ENCODE measurements at regions of chr11 and their contacts with region 1.

Region 1: GRCh38 chr11:82900277-82901164 is at the start of gene PRCP:
- DNase-seq: peak; percentile 99
- H3K4me3 ChIP-seq: peak within 1 kb of the TSS; percentile 63
- H3K4me3 Mint-ChIP-seq: peak within 1 kb of the TSS; percentile 93
- H3K27ac Mint-ChIP-seq: peak within 1 kb of the TSS; percentile 95
- H3K4me1 ChIP-seq: peaks cover 4% of the 10 kb centered on the region; the same call in 1 of the 2 replicates
- H3K4me1 Mint-ChIP-seq: peaks cover 40% of the 10 kb centered on the region
- H3K27me3 ChIP-seq: no peaks in the 10 kb centered on the region
- H3K27me3 Mint-ChIP-seq: no peaks in the 10 kb centered on the region
- CTCF ChIP-seq: no peak
- total RNA-seq, gene PRCP: 107 TPM in 2 replicates

Region 2: DNA sequence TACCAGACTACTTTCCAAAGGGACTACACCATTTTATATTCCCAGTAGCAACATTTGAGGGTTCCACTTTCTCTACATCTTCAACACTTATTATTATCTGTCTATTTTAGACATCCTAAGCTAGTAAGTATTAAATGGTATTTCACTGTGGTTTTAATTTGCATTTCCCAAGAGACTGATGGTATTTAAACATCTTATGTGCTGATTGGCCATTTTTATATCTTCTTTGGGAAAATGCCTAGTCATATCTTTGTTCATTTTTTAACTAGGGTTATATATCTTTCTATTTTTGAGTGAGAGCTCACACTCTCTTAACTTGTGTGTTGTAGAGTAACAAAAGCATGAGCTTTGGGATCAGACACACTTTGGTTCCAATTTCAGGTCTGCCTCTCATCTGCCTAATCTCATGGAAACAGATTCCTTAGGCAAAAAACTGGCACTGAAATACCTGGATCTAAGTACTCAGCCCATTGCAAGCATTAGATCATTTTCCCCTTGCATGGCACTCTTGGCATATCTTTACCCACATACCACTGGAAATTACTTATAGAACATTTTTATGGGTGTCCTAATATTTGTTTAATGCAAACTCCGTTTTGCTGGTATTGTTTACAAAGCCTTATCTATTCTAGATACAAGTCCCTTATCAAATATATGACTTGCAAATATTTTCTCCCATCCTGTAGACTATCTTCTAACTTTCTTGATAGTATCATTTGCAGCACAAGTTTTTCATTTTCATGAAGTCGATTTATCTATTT is 73.8 kb before region 1 on chr11:
- CTCF ChIA-PET with region 1: no interaction called
- POLR2A ChIA-PET with region 1: interaction called, 11 read pairs
- intact Hi-C with region 1: no loop called
- DNase-seq: no peak
- H3K4me3 ChIP-seq: no peak overlapping the region
- H3K4me3 Mint-ChIP-seq: no peak overlapping the region
- H3K27ac Mint-ChIP-seq: no peak overlapping the region
- H3K4me1 ChIP-seq: peaks cover 8% of the 10 kb centered on the region
- H3K4me1 Mint-ChIP-seq: peaks cover 11% of the 10 kb centered on the region
- H3K27me3 ChIP-seq: no peaks in the 10 kb centered on the region
- H3K27me3 Mint-ChIP-seq: no peaks in the 10 kb centered on the region
- CTCF ChIP-seq: no peak

Region 3: DNA sequence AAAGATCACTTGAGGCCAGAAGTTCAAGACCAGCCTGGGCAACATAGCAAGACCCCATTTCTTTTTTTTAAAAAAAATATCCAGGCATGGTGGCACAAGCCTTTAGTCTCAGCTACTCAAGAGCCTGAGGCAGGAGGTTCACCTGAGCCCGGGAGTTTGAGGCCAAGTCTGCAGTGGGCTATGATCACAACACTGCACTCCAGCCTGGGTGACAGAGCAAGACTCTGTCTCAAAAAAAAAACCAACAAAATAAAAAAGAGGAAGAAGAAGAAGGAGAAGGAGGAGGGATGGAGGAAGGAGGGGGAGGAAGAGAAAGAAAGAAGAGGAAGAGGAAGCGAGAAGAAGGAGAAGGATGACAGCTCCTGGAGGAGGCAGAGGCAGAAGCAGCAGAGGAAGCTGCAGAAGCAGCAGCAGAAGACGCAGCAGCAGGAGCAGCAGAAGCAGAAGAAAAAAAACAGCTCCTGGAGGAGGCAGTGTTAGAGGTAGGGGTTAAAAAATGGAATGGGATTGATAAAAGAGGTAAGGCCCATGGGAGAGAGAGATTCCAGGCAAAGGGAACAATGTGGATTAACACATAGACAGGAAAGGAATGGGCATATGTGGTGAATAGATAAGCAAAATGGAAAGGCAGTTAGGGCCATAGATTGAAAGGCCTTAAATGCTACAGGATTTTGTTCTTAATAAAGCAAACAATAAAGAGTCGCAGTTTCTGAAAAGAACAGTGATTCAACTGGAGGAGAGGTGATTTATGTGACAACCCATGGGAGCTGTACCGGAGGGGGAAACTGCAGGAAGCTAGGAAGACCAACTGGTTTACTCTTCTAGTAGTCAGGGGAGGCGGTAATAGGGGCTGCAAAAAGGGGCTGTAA is 11.2 kb before region 1 on chr11:
- CTCF ChIA-PET with region 1: interaction called, 4 read pairs
- POLR2A ChIA-PET with region 1: interaction called, 15 read pairs
- intact Hi-C with region 1: loop called (anchors 1 kb)
- DNase-seq: no peak
- H3K4me3 ChIP-seq: no peak overlapping the region
- H3K4me3 Mint-ChIP-seq: no peak overlapping the region
- H3K27ac Mint-ChIP-seq: no peak overlapping the region
- H3K4me1 ChIP-seq: peaks cover 8% of the 10 kb centered on the region; the same call in 1 of the 2 replicates
- H3K4me1 Mint-ChIP-seq: peaks cover 6% of the 10 kb centered on the region
- H3K27me3 ChIP-seq: no peaks in the 10 kb centered on the region
- H3K27me3 Mint-ChIP-seq: no peaks in the 10 kb centered on the region
- CTCF ChIP-seq: no peak

Region 4: GRCh38 chr11:83063073-83063754 is 162.7 kb after region 1 on chr11:
- CTCF ChIA-PET with region 1: interaction called, 5 read pairs
- POLR2A ChIA-PET with region 1: interaction called, 10 read pairs
- intact Hi-C with region 1: no loop called
- DNase-seq: peak in 1 of 2 experiments; percentile 24
- H3K4me3 ChIP-seq: no peak overlapping the region
- H3K4me3 Mint-ChIP-seq: peak overlapping the region; percentile 4
- H3K27ac Mint-ChIP-seq: peak overlapping the region; percentile 20
- H3K4me1 ChIP-seq: peaks cover 17% of the 10 kb centered on the region
- H3K4me1 Mint-ChIP-seq: peaks cover 19% of the 10 kb centered on the region
- H3K27me3 ChIP-seq: no peaks in the 10 kb centered on the region
- H3K27me3 Mint-ChIP-seq: no peaks in the 10 kb centered on the region
- CTCF ChIP-seq: no peak

Region 5: DNA sequence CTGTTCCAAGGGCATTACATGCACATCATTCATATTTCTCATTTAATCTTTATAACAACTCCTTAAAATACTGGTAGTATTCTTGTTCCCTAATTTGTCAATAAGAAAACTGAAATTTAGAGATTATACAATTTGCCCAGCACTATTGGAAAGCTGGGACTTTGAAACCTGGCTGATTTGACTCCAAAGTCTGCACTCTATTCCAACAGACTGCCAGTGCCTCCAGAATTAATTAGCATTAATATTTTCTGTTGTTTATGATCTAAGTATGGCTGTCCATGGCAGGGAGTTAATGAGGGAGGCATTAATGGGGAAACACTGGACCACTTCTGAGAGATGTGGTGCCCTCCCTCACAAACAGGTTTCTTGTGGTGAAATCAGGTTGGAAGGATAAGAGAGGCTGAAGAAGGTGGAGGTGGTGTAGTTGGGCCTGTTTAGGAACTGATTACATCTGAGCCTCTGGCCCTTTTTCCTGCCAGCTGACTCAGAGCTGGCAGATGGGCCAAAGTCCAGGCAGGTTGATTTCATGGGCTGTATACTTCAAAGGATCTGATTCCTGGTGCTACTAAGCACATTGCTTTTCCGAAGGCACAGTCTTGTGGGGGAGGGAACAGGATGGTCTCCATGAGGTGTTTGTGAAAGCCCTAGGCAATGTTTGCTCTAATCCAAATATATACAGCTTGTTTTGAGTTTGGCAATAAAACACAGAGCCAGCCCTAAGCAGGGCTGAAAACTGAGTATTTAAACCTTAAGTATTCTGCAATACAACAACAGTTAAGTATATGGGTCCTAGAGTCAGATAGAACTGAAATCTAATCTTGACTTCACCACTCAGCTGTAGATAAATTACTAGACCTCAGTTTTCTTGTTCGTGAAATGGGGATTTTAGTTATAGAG is 192.2 kb after region 1 on chr11:
- CTCF ChIA-PET with region 1: interaction called, 13 read pairs
- POLR2A ChIA-PET with region 1: no interaction called
- intact Hi-C with region 1: no loop called
- DNase-seq: peak; percentile 95 to 96
- H3K4me3 ChIP-seq: no peak overlapping the region
- H3K4me3 Mint-ChIP-seq: peak overlapping the region; percentile 21
- H3K27ac Mint-ChIP-seq: peak overlapping the region; percentile 55
- H3K4me1 ChIP-seq: peaks cover 43% of the 10 kb centered on the region
- H3K4me1 Mint-ChIP-seq: peaks cover 65% of the 10 kb centered on the region
- H3K27me3 ChIP-seq: no peaks in the 10 kb centered on the region
- H3K27me3 Mint-ChIP-seq: no peaks in the 10 kb centered on the region
- CTCF ChIP-seq: no peak

Region 6: DNA sequence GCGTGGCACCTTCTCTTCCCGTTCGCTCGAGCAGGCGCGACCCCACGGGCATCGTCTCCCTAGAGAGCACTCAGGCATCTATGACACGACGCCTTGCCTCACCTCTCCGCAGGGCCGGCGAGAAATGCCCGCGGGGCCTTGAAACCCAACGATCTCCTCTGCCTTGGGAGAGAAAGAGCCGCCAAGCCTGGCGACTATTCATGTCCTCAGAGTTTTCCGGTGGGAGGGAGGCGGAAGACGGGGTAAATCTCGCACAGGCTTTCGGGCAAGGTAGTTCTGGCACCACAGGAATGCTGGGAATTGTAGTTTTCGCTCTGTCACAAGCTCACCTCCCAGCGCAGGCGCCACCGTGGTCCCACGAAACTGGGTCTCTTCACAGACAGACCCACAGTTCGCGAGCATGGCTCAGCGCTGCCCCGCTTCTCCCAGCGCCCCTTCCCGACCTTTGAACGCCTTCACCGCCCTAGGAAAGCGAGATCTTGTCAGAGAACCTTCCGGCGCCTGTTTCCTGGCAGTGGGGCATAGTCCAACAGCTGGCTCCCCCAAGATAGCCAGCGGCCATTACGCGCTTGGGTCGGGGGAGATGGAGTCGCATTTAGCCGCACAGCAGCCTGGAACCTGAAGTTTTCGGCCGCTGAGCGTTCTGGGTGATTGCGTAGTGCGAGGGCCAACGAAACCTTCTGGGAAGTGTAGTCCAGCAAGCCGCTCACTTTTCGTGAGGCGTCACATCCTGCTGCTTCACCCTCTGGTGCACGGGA is 385.4 kb after region 1 on chr11 and contains the start of gene CCDC90B:
- CTCF ChIA-PET with region 1: interaction called, 3 read pairs
- POLR2A ChIA-PET with region 1: interaction called, 10 read pairs
- intact Hi-C with region 1: loop called (anchors 1 kb)
- DNase-seq: peak; percentile 98 to 99
- H3K4me3 ChIP-seq: peak within 1 kb of the TSS; percentile 93
- H3K4me3 Mint-ChIP-seq: peak within 1 kb of the TSS; percentile 73
- H3K27ac Mint-ChIP-seq: peak within 1 kb of the TSS; percentile 97
- H3K4me1 ChIP-seq: peaks cover 14% of the 10 kb centered on the region
- H3K4me1 Mint-ChIP-seq: peaks cover 7% of the 10 kb centered on the region
- H3K27me3 ChIP-seq: no peaks in the 10 kb centered on the region
- H3K27me3 Mint-ChIP-seq: no peaks in the 10 kb centered on the region
- CTCF ChIP-seq: peak in 1 of 2 experiments; percentile 66
- total RNA-seq, gene CCDC90B: 46.2 and 63.6 TPM in 2 replicates